T-cell (primary cell): ENCODE measurements at regions of chr9 and their contacts with region 1.

Region 1: GRCh38 chr9:70419546-70420266 is 5.2 kb upstream of the KLF9 start:
- DNase-seq: peak; percentile 78 to 95 (median 86)
- ATAC-seq: peak; percentile 59 to 68 (median 64)
- H3K4me3 ChIP-seq: peak overlapping the region; percentile 68 to 69
- H3K4me3 Mint-ChIP-seq: peak overlapping the region; percentile 81 to 95 (median 91)
- H3K27ac ChIP-seq: peak overlapping the region; percentile 98
- H3K27ac Mint-ChIP-seq: peak overlapping the region; percentile 100
- H3K4me1 ChIP-seq: peaks cover 20 to 43% of the 10 kb centered on the region in 2 experiments
- H3K4me1 Mint-ChIP-seq: peaks cover 44 to 58% (median 57%) of the 10 kb centered on the region in 3 donors
- H3K27me3 ChIP-seq: no peaks in the 10 kb centered on the region
- H3K27me3 Mint-ChIP-seq: no peaks in the 10 kb centered on the region

Region 2: GRCh38 chr9:70556771-70557170 is 137.1 kb after region 1 on chr9:
- CTCF ChIA-PET with region 1: no interaction called
- POLR2A ChIA-PET with region 1: interaction called in 1 of 2 experiments, 15 read pairs
- DNase-seq: no peak
- ATAC-seq: no peak
- H3K4me3 ChIP-seq: no peak overlapping the region
- H3K4me3 Mint-ChIP-seq: no peak overlapping the region
- H3K27ac ChIP-seq: no peak overlapping the region
- H3K27ac Mint-ChIP-seq: no peak overlapping the region
- H3K4me1 ChIP-seq: no peaks in the 10 kb centered on the region
- H3K4me1 Mint-ChIP-seq: peaks cover 3 to 13% (median 4%) of the 10 kb centered on the region in 3 donors
- H3K27me3 ChIP-seq: no peaks in the 10 kb centered on the region
- H3K27me3 Mint-ChIP-seq: no peaks in the 10 kb centered on the region

Region 3: GRCh38 chr9:71878327-71879274 is 1458.9 kb after region 1 on chr9:
- CTCF ChIA-PET with region 1: no interaction called
- POLR2A ChIA-PET with region 1: no interaction called
- DNase-seq: no peak
- ATAC-seq: no peak
- H3K4me3 ChIP-seq: no peak overlapping the region
- H3K4me3 Mint-ChIP-seq: no peak overlapping the region
- H3K27ac ChIP-seq: no peak overlapping the region
- H3K27ac Mint-ChIP-seq: no peak overlapping the region
- H3K4me1 ChIP-seq: peaks cover 0 to 3% of the 10 kb centered on the region in 2 experiments
- H3K4me1 Mint-ChIP-seq: peaks cover 14 to 35% (median 16%) of the 10 kb centered on the region in 3 donors
- H3K27me3 ChIP-seq: no peaks in the 10 kb centered on the region
- H3K27me3 Mint-ChIP-seq: no peaks in the 10 kb centered on the region

Region 4: GRCh38 chr9:72038890-72039410 is 1619.2 kb after region 1 on chr9:
- CTCF ChIA-PET with region 1: no interaction called
- POLR2A ChIA-PET with region 1: no interaction called
- DNase-seq: peak; percentile 2 to 75 (median 40)
- ATAC-seq: peak; percentile 56 to 67 (median 62)
- H3K4me3 ChIP-seq: no peak overlapping the region
- H3K4me3 Mint-ChIP-seq: no peak overlapping the region
- H3K27ac ChIP-seq: no peak overlapping the region
- H3K27ac Mint-ChIP-seq: no peak overlapping the region
- H3K4me1 ChIP-seq: peaks cover 0 to 7% of the 10 kb centered on the region in 2 experiments
- H3K4me1 Mint-ChIP-seq: peaks cover 4 to 8% (median 5%) of the 10 kb centered on the region in 3 donors
- H3K27me3 ChIP-seq: peaks cover 0 to 12% of the 10 kb centered on the region in 2 experiments
- H3K27me3 Mint-ChIP-seq: peaks cover 12 to 18% of the 10 kb centered on the region in 2 donors